ENCODE measurements at regions of chr5 and their contacts with region 1.

Region 1: DNA sequence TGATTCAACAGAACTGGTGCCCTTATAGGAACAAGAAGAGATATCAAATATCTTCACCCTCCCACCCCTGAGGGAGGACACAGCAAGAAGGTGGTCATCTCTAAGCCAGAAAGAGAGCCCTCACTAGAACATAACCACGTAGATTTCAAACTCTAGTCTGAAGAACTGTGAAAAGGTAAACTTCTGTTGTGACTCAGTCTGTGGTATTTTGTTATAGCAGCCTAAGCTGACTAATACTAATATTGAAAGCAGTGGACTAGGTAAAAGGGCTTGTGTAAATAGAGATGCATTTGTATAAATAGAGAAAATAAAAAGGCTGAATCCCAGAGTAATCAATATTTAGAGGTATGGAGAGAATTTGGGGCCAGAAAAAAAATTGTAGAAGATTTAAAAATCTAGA is 157.6 kb upstream of the CCNH start:
- DNase-seq: no peak

Region 2: GRCh38 chr5:86330736-86331135 is 1239.6 kb before region 1 on chr5:
- intact Hi-C with region 1: loop called in 1 of 2 experiments (anchors 5 kb)
- DNase-seq: no peak

Measured in posterior vena cava (tissue), 2 donors.